MCF 10A (cell line): ENCODE measurements at regions of chr7 and their contacts with region 1.

Region 1: DNA sequence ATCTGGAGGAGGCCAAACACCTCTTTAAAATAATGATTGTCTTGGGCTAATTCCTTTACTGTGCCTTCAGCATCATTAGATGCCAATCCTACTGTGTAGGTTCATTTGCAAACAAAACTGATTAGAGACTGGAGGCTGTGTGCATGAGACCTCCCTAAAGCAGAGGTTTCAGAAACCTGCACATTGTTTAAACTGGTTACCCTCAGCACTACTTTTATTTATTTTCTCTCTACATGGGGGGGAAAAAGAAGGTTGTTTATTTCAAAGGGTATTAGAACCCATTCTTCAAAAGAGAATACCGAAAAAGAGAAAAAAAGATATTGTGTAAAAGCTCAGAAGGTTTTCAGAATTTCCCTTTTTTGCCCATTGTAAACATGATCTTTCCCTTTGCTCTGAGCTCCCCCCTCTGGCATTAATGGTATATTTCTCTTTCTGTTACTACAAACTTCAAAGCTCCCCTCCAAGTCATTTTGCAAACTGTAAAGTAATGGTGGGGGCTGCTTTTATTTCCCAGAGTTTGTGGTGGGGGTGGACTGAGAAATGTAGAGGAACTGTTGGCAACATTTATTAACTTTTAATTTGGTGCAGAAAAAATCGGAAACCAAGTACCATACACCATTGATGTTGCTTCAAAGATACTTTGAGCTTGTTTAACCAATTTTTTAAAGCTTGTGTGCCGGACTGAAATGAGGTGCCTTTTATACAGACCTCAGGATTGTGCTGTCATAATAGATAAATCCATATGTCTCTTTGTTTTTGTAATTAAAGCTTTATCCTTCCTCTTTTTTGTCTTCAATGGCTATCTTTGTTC is 181.4 kb downstream of the EXOC4 start:
- DNase-seq: peak; percentile 43
- H3K4me3 Mint-ChIP-seq: no peak overlapping the region
- H3K27ac Mint-ChIP-seq: no peak overlapping the region
- H3K4me1 Mint-ChIP-seq: peaks cover 47% of the 10 kb centered on the region
- H3K27me3 Mint-ChIP-seq: no peaks in the 10 kb centered on the region
- CTCF ChIP-seq: peak; percentile 50

Region 2: DNA sequence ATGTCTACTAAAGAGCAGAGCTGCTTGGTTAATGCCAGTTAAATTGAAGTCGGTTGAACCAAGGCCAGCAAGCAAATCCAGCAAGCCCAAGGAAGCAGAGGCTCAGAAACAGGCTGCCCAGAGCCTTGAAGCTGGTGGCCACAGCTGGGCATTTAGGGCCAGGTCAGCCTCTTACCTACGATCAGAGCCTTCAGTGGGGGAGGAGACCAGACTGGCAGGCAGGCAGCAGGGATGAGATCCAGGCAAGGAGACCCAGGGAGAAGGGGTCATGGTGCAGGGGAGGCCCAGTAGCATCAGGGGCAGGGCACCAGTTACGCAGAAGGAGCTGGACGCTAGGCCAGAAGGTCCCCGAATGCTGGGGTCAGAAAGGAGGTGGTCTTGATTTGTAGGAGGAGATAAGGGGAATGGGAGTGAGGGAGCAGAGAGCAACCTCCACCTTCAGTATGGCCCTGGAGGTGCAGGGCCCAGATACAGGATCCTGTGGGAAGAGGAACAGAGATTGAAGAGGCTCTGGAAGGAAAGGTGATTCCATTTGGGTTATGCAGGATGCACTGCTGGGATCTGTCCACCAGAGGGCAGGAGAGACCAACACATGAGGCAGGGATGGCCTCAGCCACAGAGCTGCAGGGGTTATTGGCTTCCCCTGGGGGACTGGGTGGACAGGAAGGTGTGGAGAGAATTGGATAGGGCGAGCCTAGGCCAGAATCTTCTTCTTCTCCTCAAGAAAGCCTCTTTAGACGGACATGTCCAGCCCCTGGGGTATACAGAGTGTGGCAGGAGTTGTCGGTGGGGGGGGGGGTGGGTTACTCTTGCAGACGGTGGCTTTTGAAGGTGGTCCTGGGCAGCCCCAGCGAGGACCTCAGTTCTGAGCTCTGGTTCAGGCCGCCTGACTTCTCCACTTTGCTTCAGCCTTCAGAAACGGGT is 1745.3 kb before region 1 on chr7:
- CTCF ChIA-PET with region 1: no interaction called
- POLR2A ChIA-PET with region 1: no interaction called
- intact Hi-C with region 1: loop called (anchors 10 kb)
- DNase-seq: peak; percentile 70
- H3K4me3 Mint-ChIP-seq: no peak overlapping the region
- H3K27ac Mint-ChIP-seq: no peak overlapping the region
- H3K4me1 Mint-ChIP-seq: peaks cover 6% of the 10 kb centered on the region
- H3K27me3 Mint-ChIP-seq: peaks cover 89% of the 10 kb centered on the region
- CTCF ChIP-seq: peak; percentile 89

Region 3: GRCh38 chr7:132394283-132395198 is 1039.7 kb before region 1 on chr7:
- CTCF ChIA-PET with region 1: no interaction called
- POLR2A ChIA-PET with region 1: no interaction called
- intact Hi-C with region 1: loop called (anchors 5 kb)
- DNase-seq: peak; percentile 26
- H3K4me3 Mint-ChIP-seq: no peak overlapping the region
- H3K27ac Mint-ChIP-seq: no peak overlapping the region
- H3K4me1 Mint-ChIP-seq: no peaks in the 10 kb centered on the region
- H3K27me3 Mint-ChIP-seq: peaks cover 25% of the 10 kb centered on the region
- CTCF ChIP-seq: peak; percentile 24

Region 4: GRCh38 chr7:133051066-133051465 is 383.2 kb before region 1 on chr7:
- CTCF ChIA-PET with region 1: interaction called, 4 read pairs
- POLR2A ChIA-PET with region 1: no interaction called
- intact Hi-C with region 1: loop called (anchors 10 kb)
- DNase-seq: peak; percentile 4
- H3K4me3 Mint-ChIP-seq: no peak overlapping the region
- H3K27ac Mint-ChIP-seq: peak overlapping the region; percentile 90
- H3K4me1 Mint-ChIP-seq: peaks cover 26% of the 10 kb centered on the region
- H3K27me3 Mint-ChIP-seq: no peaks in the 10 kb centered on the region
- CTCF ChIP-seq: no peak

Region 5: GRCh38 chr7:133344275-133344674 is 90.0 kb before region 1 on chr7:
- CTCF ChIA-PET with region 1: interaction called, 20 read pairs
- POLR2A ChIA-PET with region 1: no interaction called
- intact Hi-C with region 1: no loop called
- DNase-seq: peak; percentile 6
- H3K4me3 Mint-ChIP-seq: no peak overlapping the region
- H3K27ac Mint-ChIP-seq: no peak overlapping the region
- H3K4me1 Mint-ChIP-seq: peaks cover 8% of the 10 kb centered on the region
- H3K27me3 Mint-ChIP-seq: no peaks in the 10 kb centered on the region
- CTCF ChIP-seq: peak; percentile 40

Region 6: GRCh38 chr7:133742709-133743538 is 308.7 kb after region 1 on chr7:
- CTCF ChIA-PET with region 1: interaction called, 5 read pairs
- POLR2A ChIA-PET with region 1: no interaction called
- intact Hi-C with region 1: loop called (anchors 2 kb)
- DNase-seq: peak; percentile 39
- H3K4me3 Mint-ChIP-seq: no peak overlapping the region
- H3K27ac Mint-ChIP-seq: no peak overlapping the region
- H3K4me1 Mint-ChIP-seq: no peaks in the 10 kb centered on the region
- H3K27me3 Mint-ChIP-seq: no peaks in the 10 kb centered on the region
- CTCF ChIP-seq: peak; percentile 49

Region 7: GRCh38 chr7:134016223-134016941 is 582.1 kb after region 1 on chr7:
- CTCF ChIA-PET with region 1: interaction called, 4 read pairs
- POLR2A ChIA-PET with region 1: no interaction called
- intact Hi-C with region 1: loop called (anchors 10 kb)
- DNase-seq: peak; percentile 33
- H3K4me3 Mint-ChIP-seq: no peak overlapping the region
- H3K27ac Mint-ChIP-seq: no peak overlapping the region
- H3K4me1 Mint-ChIP-seq: no peaks in the 10 kb centered on the region
- H3K27me3 Mint-ChIP-seq: no peaks in the 10 kb centered on the region
- CTCF ChIP-seq: peak; percentile 59

Region 8: GRCh38 chr7:134174797-134175261 is 740.6 kb after region 1 on chr7:
- CTCF ChIA-PET with region 1: no interaction called
- POLR2A ChIA-PET with region 1: no interaction called
- intact Hi-C with region 1: no loop called
- DNase-seq: peak; percentile 92
- H3K4me3 Mint-ChIP-seq: no peak overlapping the region
- H3K27ac Mint-ChIP-seq: no peak overlapping the region
- H3K4me1 Mint-ChIP-seq: peaks cover 19% of the 10 kb centered on the region
- H3K27me3 Mint-ChIP-seq: no peaks in the 10 kb centered on the region
- CTCF ChIP-seq: no peak